Activated CD8-positive, alpha-beta T cell treated with anti-CD3 and anti-CD28 coated beads for 36 hours (primary cell): ENCODE measurements at regions of chr1 and their contacts with region 1.

Region 1: GRCh38 chr1:156838981-156839410 is 19.9 kb downstream of the INSRR start:
- DNase-seq: peak; percentile 64
- ATAC-seq: peak; percentile 54
- H3K4me3 Mint-ChIP-seq: no peak overlapping the region
- H3K27ac Mint-ChIP-seq: no peak overlapping the region
- H3K4me1 Mint-ChIP-seq: peaks cover 41% of the 10 kb centered on the region
- H3K27me3 Mint-ChIP-seq: peaks cover 39% of the 10 kb centered on the region
- CTCF ChIP-seq: peak; percentile 95

Region 2: DNA sequence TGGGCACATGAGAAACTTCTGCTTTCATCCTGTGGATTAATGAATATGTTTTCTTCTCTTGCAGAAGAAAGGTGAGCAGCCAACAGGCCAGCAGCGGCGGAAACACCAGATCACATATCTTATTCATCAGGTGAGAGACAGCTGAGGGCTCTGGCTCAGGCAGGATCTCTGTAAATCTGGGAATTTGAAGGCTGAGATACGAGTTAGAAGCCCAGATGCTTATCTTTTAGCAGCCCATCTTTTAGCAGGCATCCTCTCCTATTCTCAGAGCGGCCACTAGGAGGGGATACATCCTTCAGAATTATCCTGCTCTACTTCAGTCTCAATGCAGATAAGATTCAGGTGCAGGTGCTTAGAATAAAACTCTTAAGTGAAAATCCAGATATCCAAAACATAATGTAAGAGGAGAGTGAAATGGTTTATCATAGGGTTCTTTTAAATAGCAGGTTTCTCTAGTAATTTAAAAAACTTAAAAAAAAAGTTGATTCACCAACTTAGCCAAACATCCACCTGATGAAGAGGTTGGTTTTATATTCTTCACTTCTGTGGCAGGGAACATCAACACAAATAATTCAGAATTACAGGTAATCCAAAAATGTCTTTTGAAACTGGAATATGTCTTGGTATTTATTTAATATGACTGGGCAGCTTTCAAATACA is 41.7 kb before region 1 on chr1:
- CTCF ChIA-PET with region 1: interaction called, 43 read pairs
- POLR2A ChIA-PET with region 1: interaction called, 4 read pairs
- intact Hi-C with region 1: no loop called
- DNase-seq: peak; percentile 77
- ATAC-seq: peak; percentile 84
- H3K4me3 Mint-ChIP-seq: no peak overlapping the region
- H3K27ac Mint-ChIP-seq: no peak overlapping the region
- H3K4me1 Mint-ChIP-seq: peaks cover 6% of the 10 kb centered on the region
- H3K27me3 Mint-ChIP-seq: no peaks in the 10 kb centered on the region
- CTCF ChIP-seq: peak; percentile 91

Region 3: GRCh38 chr1:156813750-156814570 is 25.0 kb before region 1 on chr1:
- CTCF ChIA-PET with region 1: interaction called, 16 read pairs
- POLR2A ChIA-PET with region 1: interaction called, 4 read pairs
- intact Hi-C with region 1: no loop called
- DNase-seq: peak; percentile 85
- ATAC-seq: peak; percentile 34
- H3K4me3 Mint-ChIP-seq: peak overlapping the region; percentile 94
- H3K27ac Mint-ChIP-seq: peak overlapping the region; percentile 99
- H3K4me1 Mint-ChIP-seq: peaks cover 58% of the 10 kb centered on the region
- H3K27me3 Mint-ChIP-seq: no peaks in the 10 kb centered on the region
- CTCF ChIP-seq: peak; percentile 44

Region 4: DNA sequence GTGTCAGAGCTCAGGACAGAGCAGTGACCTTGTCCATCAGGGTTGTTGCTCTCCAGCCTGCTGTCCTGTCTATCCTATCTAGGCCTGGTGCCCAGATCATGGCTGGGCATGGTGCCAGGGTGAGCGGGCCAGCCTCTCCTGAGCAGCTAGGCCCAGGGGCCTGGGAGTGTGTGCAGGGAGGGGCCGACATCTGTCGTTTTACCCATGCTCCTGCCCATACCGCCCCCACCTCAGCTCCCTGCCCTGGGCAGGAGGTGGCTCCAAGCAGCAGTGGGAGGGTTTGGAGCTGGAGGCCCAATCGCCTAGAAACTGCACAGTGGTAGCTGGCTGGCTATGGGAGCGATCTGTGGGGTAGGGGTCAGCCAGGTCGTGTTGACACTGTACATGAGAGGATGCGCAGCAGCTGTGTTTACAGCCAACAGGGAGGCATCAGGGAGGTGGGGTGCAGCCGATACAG is 13.4 kb after region 1 on chr1:
- CTCF ChIA-PET with region 1: interaction called, 273 read pairs
- POLR2A ChIA-PET with region 1: interaction called, 5 read pairs
- intact Hi-C with region 1: no loop called
- DNase-seq: no peak
- ATAC-seq: no peak
- H3K4me3 Mint-ChIP-seq: no peak overlapping the region
- H3K27ac Mint-ChIP-seq: no peak overlapping the region
- H3K4me1 Mint-ChIP-seq: peaks cover 21% of the 10 kb centered on the region
- H3K27me3 Mint-ChIP-seq: peaks cover 8% of the 10 kb centered on the region
- CTCF ChIP-seq: no peak

Region 5: GRCh38 chr1:156876281-156876680 is 37.3 kb after region 1 on chr1:
- CTCF ChIA-PET with region 1: interaction called, 14 read pairs
- POLR2A ChIA-PET with region 1: no interaction called
- intact Hi-C with region 1: no loop called
- DNase-seq: no peak
- ATAC-seq: no peak
- H3K4me3 Mint-ChIP-seq: no peak overlapping the region
- H3K27ac Mint-ChIP-seq: no peak overlapping the region
- H3K4me1 Mint-ChIP-seq: no peaks in the 10 kb centered on the region
- H3K27me3 Mint-ChIP-seq: peaks cover 5% of the 10 kb centered on the region
- CTCF ChIP-seq: no peak

Region 6: GRCh38 chr1:156948708-156949107 is 109.7 kb after region 1 on chr1:
- CTCF ChIA-PET with region 1: no interaction called
- POLR2A ChIA-PET with region 1: no interaction called
- intact Hi-C with region 1: no loop called
- DNase-seq: no peak
- ATAC-seq: no peak
- H3K4me3 Mint-ChIP-seq: no peak overlapping the region
- H3K27ac Mint-ChIP-seq: no peak overlapping the region
- H3K4me1 Mint-ChIP-seq: no peaks in the 10 kb centered on the region
- H3K27me3 Mint-ChIP-seq: no peaks in the 10 kb centered on the region
- CTCF ChIP-seq: no peak